ENCODE measurements at regions of chr12 and their contacts with region 1.

Region 1: GRCh38 chr12:31317471-31318395 is 8.2 kb downstream of the SINHCAF start:
- DNase-seq: no peak
- H3K4me3 Mint-ChIP-seq: peak overlapping the region; percentile 97
- H3K27ac Mint-ChIP-seq: peak overlapping the region; percentile 90
- H3K4me1 Mint-ChIP-seq: peaks cover 84% of the 10 kb centered on the region
- H3K27me3 Mint-ChIP-seq: no peaks in the 10 kb centered on the region

Region 2: GRCh38 chr12:31300341-31300740 is 17.4 kb before region 1 on chr12:
- intact Hi-C with region 1: loop called (anchors 2 kb)
- DNase-seq: no peak
- H3K4me3 Mint-ChIP-seq: no peak overlapping the region
- H3K27ac Mint-ChIP-seq: no peak overlapping the region
- H3K4me1 Mint-ChIP-seq: peaks cover 25% of the 10 kb centered on the region
- H3K27me3 Mint-ChIP-seq: no peaks in the 10 kb centered on the region